GM12878 (cell line): ENCODE measurements at regions of chr13 and their contacts with region 1.

Region 1: GRCh38 chr13:39542361-39542760 is 60.6 kb downstream of the LHFPL6 start:
- DNase-seq: no peak
- ATAC-seq: no peak; the same call in 2 of the 3 replicates
- H3K4me3 ChIP-seq: no peak overlapping the region
- H3K27ac ChIP-seq: no peak overlapping the region
- H3K4me1 ChIP-seq: no peaks in the 10 kb centered on the region
- H3K27me3 ChIP-seq: no peaks in the 10 kb centered on the region
- CTCF ChIP-seq: no peak
- EP300 ChIP-seq: no peak
- POLR2A ChIP-seq: no peak
- RAD21 ChIP-seq: no peak

Region 2: DNA sequence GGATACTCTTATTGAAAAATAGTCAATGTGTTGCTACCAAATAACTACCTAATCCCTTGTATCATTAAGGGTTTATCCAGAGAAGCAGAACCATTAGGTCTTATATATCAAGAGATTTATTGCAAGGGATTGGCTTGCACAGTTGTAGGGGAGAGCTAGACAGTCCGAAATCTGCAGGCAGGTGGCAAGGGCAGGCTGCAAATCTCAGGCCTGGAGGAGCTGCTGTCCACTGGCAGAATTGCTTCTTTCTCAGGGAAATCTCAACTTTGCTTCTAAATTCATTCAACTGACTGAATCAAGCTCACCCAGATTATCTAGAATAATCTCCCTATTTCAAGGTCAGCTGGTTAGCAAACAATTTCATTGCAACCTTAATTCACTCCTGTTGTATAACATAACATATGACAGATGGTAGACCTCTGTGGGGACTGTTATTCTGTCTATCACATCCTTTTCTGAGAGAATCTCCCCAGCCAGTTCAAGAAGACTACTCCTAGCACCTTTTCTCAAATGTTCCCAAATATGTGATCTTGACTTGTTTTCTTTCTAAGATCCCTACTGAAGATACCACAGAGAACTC is 309.9 kb before region 1 on chr13:
- CTCF ChIA-PET with region 1: no interaction called
- POLR2A ChIA-PET with region 1: no interaction called
- RAD21 ChIA-PET with region 1: no interaction called
- SMC1A ChIA-PET with region 1: no interaction called
- in situ Hi-C with region 1: no loop called
- intact Hi-C with region 1: no loop called
- DNase-seq: no peak
- ATAC-seq: no peak
- H3K4me3 ChIP-seq: no peak overlapping the region
- H3K27ac ChIP-seq: no peak overlapping the region
- H3K4me1 ChIP-seq: no peaks in the 10 kb centered on the region
- H3K27me3 ChIP-seq: no peaks in the 10 kb centered on the region
- CTCF ChIP-seq: no peak
- EP300 ChIP-seq: no peak
- POLR2A ChIP-seq: no peak
- RAD21 ChIP-seq: no peak

Region 3: DNA sequence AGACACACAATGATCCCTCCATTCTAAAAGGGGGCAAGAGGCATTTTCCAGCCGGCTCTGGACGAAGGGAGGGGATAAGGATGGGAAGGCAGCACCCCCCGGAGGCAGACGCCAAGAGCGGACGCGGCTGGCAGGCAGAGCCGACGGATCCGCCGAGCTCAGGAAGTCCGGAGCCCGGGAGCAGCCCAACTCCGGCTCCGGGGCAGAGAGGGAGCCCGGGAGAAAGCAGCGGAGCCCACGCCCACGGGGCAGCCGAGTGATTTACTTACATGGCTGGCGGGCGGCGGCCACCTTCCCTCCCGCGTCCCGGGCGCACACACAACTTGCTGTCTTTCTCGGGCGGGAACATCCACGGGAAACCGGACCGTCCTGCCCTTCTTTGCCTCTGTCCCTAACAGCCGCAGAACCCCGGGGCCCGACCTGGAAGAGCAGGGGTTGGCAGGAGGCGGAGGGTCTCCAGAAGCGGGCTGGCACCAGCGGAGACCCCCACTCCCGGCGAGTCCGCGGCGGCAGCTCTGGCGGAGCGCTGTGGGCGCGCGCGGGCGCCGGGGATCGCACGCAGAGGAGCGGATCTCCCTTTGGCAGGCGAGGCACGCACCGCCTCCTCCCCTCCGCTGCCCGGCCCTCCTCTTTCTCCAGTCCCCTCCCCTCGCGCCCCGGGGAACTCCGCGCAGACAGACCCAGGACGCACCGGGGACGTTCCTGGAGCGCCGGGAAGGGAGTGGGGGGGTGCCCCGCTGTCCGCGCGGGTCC is 60.4 kb after region 1 on chr13 and contains the start of gene LHFPL6:
- CTCF ChIA-PET with region 1: interaction called, 4 read pairs
- POLR2A ChIA-PET with region 1: no interaction called
- RAD21 ChIA-PET with region 1: no interaction called
- SMC1A ChIA-PET with region 1: interaction called, 3 read pairs
- in situ Hi-C with region 1: no loop called
- intact Hi-C with region 1: loop called (anchors 10 kb)
- DNase-seq: no peak
- ATAC-seq: peak; percentile 96
- H3K4me3 ChIP-seq: peak within 1 kb of the TSS; percentile 58
- H3K27ac ChIP-seq: no peak within 1 kb of the TSS
- H3K4me1 ChIP-seq: no peaks in the 10 kb centered on the region; the same call in 1 of the 2 replicates
- H3K27me3 ChIP-seq: peaks cover 0 to 5% of the 10 kb centered on the region in 2 experiments; a peak in 3 of 4 replicates
- CTCF ChIP-seq: peak; percentile 9 to 23 (median 11); a peak in 3 of 6 replicates
- EP300 ChIP-seq: no peak
- POLR2A ChIP-seq: peak; percentile 53
- RAD21 ChIP-seq: no peak
- polyA plus RNA-seq, gene LHFPL6: 0.11 to 0.20 TPM

Region 4: DNA sequence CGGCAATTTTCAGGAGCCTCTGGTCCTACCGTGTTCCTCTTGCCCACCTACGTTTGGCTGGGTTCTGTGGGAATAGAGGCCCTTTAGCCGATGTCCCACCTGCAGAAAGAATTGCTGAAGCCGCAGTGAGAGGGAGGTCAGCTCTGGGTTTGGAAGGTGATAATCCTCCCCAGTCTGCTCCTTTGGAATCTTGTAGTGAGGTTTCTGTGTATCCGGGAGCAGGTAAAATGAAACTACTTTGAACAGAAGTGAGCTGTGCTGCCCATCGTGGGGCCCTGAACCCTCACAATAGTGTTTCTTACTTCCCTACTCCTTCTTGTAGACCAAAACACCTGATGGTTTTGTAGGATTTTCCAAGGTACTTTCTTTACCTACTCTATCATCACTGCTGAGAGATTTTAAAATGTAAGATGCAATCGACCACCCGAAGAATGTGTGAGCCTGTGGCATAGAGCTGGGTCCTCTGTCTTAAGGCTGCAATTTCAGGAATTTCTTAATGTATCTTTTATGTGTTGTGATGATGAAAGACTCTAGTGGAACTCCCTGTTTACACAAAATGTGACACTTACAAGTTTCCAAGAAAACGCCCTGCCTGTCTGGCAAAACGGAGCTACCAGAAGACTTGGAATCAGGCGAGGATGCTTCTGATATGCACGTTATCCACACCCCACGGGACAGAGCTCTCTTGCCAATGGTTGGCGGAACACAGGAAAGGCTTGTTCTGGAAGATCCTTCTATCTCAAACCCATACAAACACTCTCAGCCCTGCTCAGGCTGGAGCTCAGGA is 1991.1 kb after region 1 on chr13:
- CTCF ChIA-PET with region 1: no interaction called
- POLR2A ChIA-PET with region 1: no interaction called
- RAD21 ChIA-PET with region 1: no interaction called
- SMC1A ChIA-PET with region 1: no interaction called
- in situ Hi-C with region 1: no loop called
- intact Hi-C with region 1: no loop called
- DNase-seq: no peak
- ATAC-seq: no peak
- H3K4me3 ChIP-seq: no peak overlapping the region
- H3K27ac ChIP-seq: no peak overlapping the region
- H3K4me1 ChIP-seq: no peaks in the 10 kb centered on the region
- H3K27me3 ChIP-seq: no peaks in the 10 kb centered on the region
- CTCF ChIP-seq: no peak
- EP300 ChIP-seq: no peak
- POLR2A ChIP-seq: no peak
- RAD21 ChIP-seq: no peak